ENCODE measurements at regions of chr1 and their contacts with region 1.

Region 1: DNA sequence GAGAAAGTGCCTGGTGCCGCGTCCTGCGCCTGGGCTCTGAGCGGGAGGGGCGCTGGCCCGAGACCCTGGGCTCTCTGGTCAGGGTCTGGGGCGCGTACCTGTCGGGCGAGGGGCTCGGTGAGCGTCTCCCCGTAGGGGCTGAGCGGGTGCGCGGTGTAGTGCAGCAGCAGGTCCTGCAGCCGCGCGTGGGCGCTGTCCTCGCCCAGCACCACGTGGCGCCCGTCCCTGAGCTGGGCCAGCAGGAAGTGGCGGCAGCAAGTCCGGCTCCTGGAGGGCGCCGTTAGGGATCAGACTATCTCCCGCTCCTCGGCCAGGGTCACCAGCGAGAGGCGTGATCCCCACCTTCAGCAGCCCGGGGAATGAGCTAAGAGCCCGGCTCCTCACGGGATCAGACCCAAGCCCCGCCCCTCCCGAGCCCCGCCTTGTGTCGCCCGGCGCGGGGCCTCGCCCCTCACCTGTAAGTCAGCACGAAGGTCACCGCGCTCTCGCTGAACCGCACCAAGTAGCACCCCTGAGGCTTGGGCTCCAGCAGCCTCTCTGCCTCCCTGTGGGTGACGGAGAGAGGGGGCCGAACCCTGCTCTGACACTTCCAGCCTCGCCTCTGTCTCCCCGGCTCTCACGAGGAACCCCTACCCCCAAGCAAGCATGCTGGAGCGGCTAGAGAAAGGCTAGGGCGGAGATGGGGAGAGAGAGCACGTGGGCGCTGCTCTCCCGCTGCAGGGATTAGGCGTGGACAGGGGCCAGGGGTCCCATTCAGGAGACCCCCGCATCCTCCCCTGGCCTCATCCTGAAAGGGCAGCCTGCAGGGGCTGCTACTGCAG is 2.7 kb downstream of the SH2D2A start:
- DNase-seq: peak; percentile 51
- H3K4me3 ChIP-seq: peak overlapping the region in 1 of 3 experiments; percentile 24
- H3K27ac ChIP-seq: peak overlapping the region; percentile 44
- H3K4me1 ChIP-seq: peaks cover 33% of the 10 kb centered on the region
- H3K27me3 ChIP-seq: no peaks in the 10 kb centered on the region
- CTCF ChIP-seq: peak; percentile 64 to 85
- POLR2A ChIP-seq: no peak

Region 2: GRCh38 chr1:156797212-156797871 is 16.6 kb before region 1 on chr1:
- CTCF ChIA-PET with region 1: interaction called, 10 read pairs
- POLR2A ChIA-PET with region 1: no interaction called
- dilution Hi-C with region 1: no loop called
- intact Hi-C with region 1: no loop called
- DNase-seq: peak; percentile 75
- H3K4me3 ChIP-seq: no peak overlapping the region
- H3K27ac ChIP-seq: no peak overlapping the region
- H3K4me1 ChIP-seq: no peaks in the 10 kb centered on the region
- H3K27me3 ChIP-seq: no peaks in the 10 kb centered on the region
- CTCF ChIP-seq: peak; percentile 61 to 72
- POLR2A ChIP-seq: no peak

Measured in endothelial cell of umbilical vein (primary cell).